ENCODE measurements at regions of chr6 and their contacts with region 1.

Region 1: DNA sequence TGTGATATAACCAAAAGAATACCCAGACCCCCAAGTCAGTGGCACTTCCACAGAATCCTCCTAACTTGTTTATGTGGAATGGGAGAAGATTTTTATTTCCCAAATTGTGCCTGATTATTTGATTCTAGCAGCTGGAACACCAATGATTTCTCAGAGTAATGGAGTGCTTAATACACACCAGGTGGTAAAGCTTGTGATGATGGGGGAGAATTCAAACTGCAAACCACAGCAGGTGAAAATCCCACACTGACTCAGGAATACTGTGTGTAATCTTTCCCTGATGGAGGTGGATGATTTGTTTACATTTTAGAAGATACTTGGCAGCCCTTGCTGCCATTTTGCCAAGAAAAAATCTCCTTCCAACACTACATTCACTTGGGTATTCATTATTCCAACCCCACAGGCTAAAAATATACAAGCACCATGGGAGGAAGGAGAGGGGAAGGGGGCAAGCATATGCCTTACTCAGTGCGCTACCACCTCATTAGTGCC is 212.7 kb upstream of the PLN start:
- DNase-seq: no peak
- ATAC-seq: no peak
- H3K4me3 ChIP-seq: no peak overlapping the region
- H3K27ac ChIP-seq: peak overlapping the region; percentile 80 to 90 (median 88)
- H3K4me1 ChIP-seq: peaks cover 28 to 29% of the 10 kb centered on the region in 2 donors
- H3K27me3 ChIP-seq: no peaks in the 10 kb centered on the region
- CTCF ChIP-seq: no peak
- POLR2A ChIP-seq: no peak

Region 2: GRCh38 chr6:118316796-118317384 is 18.5 kb before region 1 on chr6:
- in situ Hi-C with region 1: no loop called
- intact Hi-C with region 1: no loop called
- DNase-seq: no peak
- ATAC-seq: peak; percentile 41 to 47
- H3K4me3 ChIP-seq: peak overlapping the region in 1 of 4 donors; percentile 31
- H3K27ac ChIP-seq: peak overlapping the region; percentile 32 to 71 (median 60)
- H3K4me1 ChIP-seq: peaks cover 31% of the 10 kb centered on the region in 2 donors
- H3K27me3 ChIP-seq: no peaks in the 10 kb centered on the region
- CTCF ChIP-seq: no peak
- POLR2A ChIP-seq: no peak

Region 3: GRCh38 chr6:118396969-118397368 is 61.6 kb after region 1 on chr6:
- in situ Hi-C with region 1: no loop called
- intact Hi-C with region 1: loop called (anchors 1 kb)
- DNase-seq: no peak
- ATAC-seq: no peak
- H3K4me3 ChIP-seq: no peak overlapping the region
- H3K27ac ChIP-seq: peak overlapping the region; percentile 79 to 87 (median 82)
- H3K4me1 ChIP-seq: peaks cover 34% of the 10 kb centered on the region in 2 donors
- H3K27me3 ChIP-seq: no peaks in the 10 kb centered on the region
- CTCF ChIP-seq: no peak
- POLR2A ChIP-seq: no peak